ENCODE measurements at regions of chr6 and their contacts with region 1.

Region 1: GRCh38 chr6:141483598-141484061 is 649.1 kb upstream of the GJE1 start:
- DNase-seq: peak; percentile 65
- H3K4me3 Mint-ChIP-seq: peak overlapping the region; percentile 73
- H3K27ac Mint-ChIP-seq: peak overlapping the region; percentile 93
- H3K4me1 Mint-ChIP-seq: peaks cover 41% of the 10 kb centered on the region
- H3K27me3 Mint-ChIP-seq: no peaks in the 10 kb centered on the region

Region 2: DNA sequence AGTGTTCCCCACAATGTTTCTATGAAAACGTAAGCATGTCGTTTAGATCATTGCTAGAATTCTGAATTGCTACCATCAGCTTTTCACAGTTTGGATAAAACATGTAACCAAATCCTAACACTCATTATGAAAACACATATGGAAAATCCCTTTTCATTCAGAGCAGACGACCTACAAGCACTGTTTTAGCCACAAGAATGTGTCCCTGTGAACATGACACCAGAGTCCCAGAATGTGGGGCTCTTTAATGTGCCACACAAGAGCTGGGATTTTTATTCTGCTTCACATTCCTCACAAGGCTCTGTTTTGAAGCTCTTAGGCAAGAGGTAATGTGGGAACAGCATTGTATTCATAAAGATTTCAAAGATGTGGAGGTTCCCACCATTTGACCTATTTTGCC is 1968.1 kb before region 1 on chr6:
- CTCF ChIA-PET with region 1: no interaction called
- POLR2A ChIA-PET with region 1: no interaction called
- intact Hi-C with region 1: loop called (anchors 10 kb)
- DNase-seq: no peak
- H3K4me3 Mint-ChIP-seq: no peak overlapping the region
- H3K27ac Mint-ChIP-seq: peak overlapping the region; percentile 76
- H3K4me1 Mint-ChIP-seq: peaks cover 32% of the 10 kb centered on the region
- H3K27me3 Mint-ChIP-seq: no peaks in the 10 kb centered on the region

Region 3: GRCh38 chr6:140586426-140587061 is 897.1 kb before region 1 on chr6:
- CTCF ChIA-PET with region 1: no interaction called
- POLR2A ChIA-PET with region 1: no interaction called
- intact Hi-C with region 1: loop called (anchors 2 kb)
- DNase-seq: peak; percentile 50
- H3K4me3 Mint-ChIP-seq: no peak overlapping the region
- H3K27ac Mint-ChIP-seq: peak overlapping the region; percentile 49
- H3K4me1 Mint-ChIP-seq: peaks cover 28% of the 10 kb centered on the region
- H3K27me3 Mint-ChIP-seq: peaks cover 10% of the 10 kb centered on the region

Region 4: GRCh38 chr6:140809694-140810101 is 673.9 kb before region 1 on chr6:
- CTCF ChIA-PET with region 1: no interaction called
- POLR2A ChIA-PET with region 1: no interaction called
- intact Hi-C with region 1: loop called (anchors 10 kb)
- DNase-seq: no peak
- H3K4me3 Mint-ChIP-seq: no peak overlapping the region
- H3K27ac Mint-ChIP-seq: no peak overlapping the region
- H3K4me1 Mint-ChIP-seq: peaks cover 7% of the 10 kb centered on the region
- H3K27me3 Mint-ChIP-seq: peaks cover 4% of the 10 kb centered on the region

Region 5: DNA sequence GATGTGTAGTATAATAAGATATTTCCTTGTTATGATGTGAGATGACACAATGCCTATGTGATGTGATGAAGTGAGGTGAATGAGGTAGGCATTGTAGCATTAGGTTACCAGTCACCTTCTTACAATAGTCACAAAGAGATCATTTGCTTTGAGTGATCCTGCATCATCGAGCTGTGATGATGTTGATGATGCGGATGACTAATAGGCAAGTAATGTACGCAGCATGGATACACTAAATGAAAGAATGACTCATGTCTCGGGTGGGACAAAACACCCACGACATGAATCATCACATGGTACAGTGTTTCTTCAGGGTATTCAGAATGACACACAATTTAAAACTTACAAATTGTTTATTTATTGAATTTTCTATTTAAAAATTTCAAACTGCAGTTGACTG is 157.2 kb before region 1 on chr6:
- CTCF ChIA-PET with region 1: no interaction called
- POLR2A ChIA-PET with region 1: no interaction called
- intact Hi-C with region 1: loop called (anchors 1 kb)
- DNase-seq: peak; percentile 75
- H3K4me3 Mint-ChIP-seq: no peak overlapping the region
- H3K27ac Mint-ChIP-seq: no peak overlapping the region
- H3K4me1 Mint-ChIP-seq: peaks cover 17% of the 10 kb centered on the region
- H3K27me3 Mint-ChIP-seq: no peaks in the 10 kb centered on the region

Region 6: GRCh38 chr6:141464490-141464889 is 19.1 kb before region 1 on chr6:
- CTCF ChIA-PET with region 1: interaction called, 3 read pairs
- POLR2A ChIA-PET with region 1: no interaction called
- intact Hi-C with region 1: loop called (anchors 1 kb)
- DNase-seq: no peak
- H3K4me3 Mint-ChIP-seq: no peak overlapping the region
- H3K27ac Mint-ChIP-seq: no peak overlapping the region
- H3K4me1 Mint-ChIP-seq: peaks cover 13% of the 10 kb centered on the region
- H3K27me3 Mint-ChIP-seq: no peaks in the 10 kb centered on the region

Region 7: GRCh38 chr6:141498977-141499376 is 15.3 kb after region 1 on chr6:
- CTCF ChIA-PET with region 1: no interaction called
- POLR2A ChIA-PET with region 1: no interaction called
- intact Hi-C with region 1: no loop called
- DNase-seq: no peak
- H3K4me3 Mint-ChIP-seq: no peak overlapping the region
- H3K27ac Mint-ChIP-seq: no peak overlapping the region
- H3K4me1 Mint-ChIP-seq: no peaks in the 10 kb centered on the region
- H3K27me3 Mint-ChIP-seq: no peaks in the 10 kb centered on the region

Region 8: DNA sequence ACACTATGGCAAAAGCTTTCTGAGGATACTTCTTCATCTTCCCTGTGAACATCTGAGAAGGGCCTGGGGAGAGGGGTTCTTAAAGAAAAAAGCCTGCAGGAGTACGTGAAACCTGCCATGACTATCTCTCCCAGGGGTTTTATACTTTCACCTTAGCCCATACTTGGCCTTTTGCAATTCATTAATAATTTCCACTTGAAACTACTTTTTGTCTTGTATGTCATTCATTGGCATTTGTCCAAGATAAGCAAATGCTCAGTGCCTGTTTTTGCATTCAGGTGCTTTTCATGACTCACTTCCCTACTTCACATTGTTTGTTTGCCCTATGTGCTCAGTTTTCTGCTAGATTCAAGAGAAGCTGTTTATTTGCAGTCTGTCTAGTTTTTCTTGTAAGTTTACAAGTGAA is 68.8 kb after region 1 on chr6:
- CTCF ChIA-PET with region 1: no interaction called
- POLR2A ChIA-PET with region 1: no interaction called
- intact Hi-C with region 1: loop called (anchors 2 kb)
- DNase-seq: no peak
- H3K4me3 Mint-ChIP-seq: no peak overlapping the region
- H3K27ac Mint-ChIP-seq: no peak overlapping the region
- H3K4me1 Mint-ChIP-seq: peaks cover 12% of the 10 kb centered on the region
- H3K27me3 Mint-ChIP-seq: no peaks in the 10 kb centered on the region